SK-N-SH (cell line): ENCODE measurements at regions of chr7 and their contacts with region 1.

Region 1: DNA sequence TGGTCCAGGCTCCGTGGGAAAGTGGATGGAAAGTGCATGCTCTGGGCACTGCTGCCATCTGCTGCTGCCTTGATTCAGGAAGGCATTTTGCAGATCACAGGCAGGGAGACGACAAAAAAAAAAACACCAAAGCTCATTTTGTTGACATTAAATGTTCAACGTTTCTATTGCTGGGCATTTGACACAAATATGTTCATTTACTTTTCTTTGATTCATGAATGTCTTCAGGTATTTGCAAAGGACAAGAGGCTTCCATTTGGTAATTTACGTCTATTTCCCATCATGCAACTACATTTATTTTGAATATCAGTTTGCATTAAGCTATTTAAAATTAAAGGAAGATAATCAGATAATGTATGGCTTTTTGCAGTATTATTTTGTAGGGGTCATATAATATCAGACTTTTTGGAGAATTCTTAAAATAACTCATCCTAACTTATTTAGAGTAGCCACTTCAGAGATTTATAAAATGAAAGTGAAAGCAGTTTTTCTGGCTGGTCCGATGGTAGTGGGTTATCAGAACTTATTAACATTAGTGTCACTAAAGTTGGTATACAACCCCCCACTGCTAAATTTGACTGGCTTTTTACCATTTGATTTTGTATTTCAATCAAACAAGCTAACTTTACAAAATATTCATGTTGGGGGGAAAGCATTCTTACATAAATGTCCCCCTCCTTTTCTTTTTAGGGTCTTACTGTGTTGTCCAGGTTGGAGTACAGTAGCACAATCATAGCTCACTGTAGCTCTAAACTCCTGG is 65.3 kb downstream of the PDIA4 start:
- DNase-seq: peak; percentile 82
- H3K4me3 ChIP-seq: peak overlapping the region; percentile 56 to 69
- H3K27ac ChIP-seq: peak overlapping the region; percentile 24 to 73
- H3K4me1 ChIP-seq: no peaks in the 10 kb centered on the region; a peak in 2 of 4 replicates
- H3K27me3 ChIP-seq: no peaks in the 10 kb centered on the region
- CTCF ChIP-seq: peak; percentile 100
- EP300 ChIP-seq: no peak
- RAD21 ChIP-seq: peak; percentile 98

Region 2: GRCh38 chr7:148503875-148504487 is 459.0 kb before region 1 on chr7:
- CTCF ChIA-PET with region 1: interaction called, 55 read pairs
- POLR2A ChIA-PET with region 1: no interaction called
- DNase-seq: peak; percentile 48
- H3K4me3 ChIP-seq: no peak overlapping the region
- H3K27ac ChIP-seq: no peak overlapping the region
- H3K4me1 ChIP-seq: peaks cover 0 to 4% of the 10 kb centered on the region in 2 experiments; a peak in 1 of 4 replicates
- H3K27me3 ChIP-seq: peaks cover 18% of the 10 kb centered on the region; the same call in 1 of the 2 replicates
- CTCF ChIP-seq: peak; percentile 99
- EP300 ChIP-seq: no peak
- RAD21 ChIP-seq: peak; percentile 90

Region 3: DNA sequence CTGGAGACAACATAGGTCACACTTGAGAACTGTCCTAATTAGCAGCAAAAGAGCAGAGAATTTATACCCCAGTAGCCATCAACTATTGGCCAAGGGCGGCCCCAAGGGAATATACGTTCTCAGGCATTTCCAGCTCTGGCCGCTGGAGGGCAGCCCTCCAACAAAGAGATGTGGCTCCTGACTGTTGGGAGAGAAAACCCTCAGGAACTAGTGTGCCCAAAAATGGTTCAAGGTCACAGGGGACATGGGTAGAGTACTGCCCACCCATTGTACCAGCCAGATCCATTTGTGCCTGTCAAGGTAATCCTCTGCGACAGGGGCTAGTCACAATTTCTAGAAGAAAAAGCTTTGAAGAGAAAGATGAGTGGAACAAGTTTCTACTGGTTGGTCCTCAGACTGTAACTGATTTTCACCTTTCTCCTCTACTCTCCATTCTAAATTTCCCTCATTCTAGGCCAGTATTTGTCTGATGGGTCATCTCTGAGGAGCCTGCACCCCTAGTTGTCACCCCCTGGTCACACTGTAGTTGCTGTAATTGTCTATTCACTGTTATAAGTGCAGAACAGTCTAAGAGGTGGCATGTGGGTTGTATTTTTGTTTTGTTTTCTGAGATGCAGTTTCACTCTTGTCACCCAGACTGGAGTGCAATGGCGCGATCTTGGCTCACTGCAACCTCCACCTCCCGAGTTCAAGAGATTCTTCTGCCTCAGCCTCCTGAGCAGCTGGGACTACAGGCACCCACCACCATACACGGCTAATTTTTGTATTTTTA is 387.2 kb before region 1 on chr7:
- CTCF ChIA-PET with region 1: interaction called, 114 read pairs
- POLR2A ChIA-PET with region 1: no interaction called
- DNase-seq: peak; percentile 75
- H3K4me3 ChIP-seq: no peak overlapping the region
- H3K27ac ChIP-seq: no peak overlapping the region
- H3K4me1 ChIP-seq: no peaks in the 10 kb centered on the region
- H3K27me3 ChIP-seq: no peaks in the 10 kb centered on the region
- CTCF ChIP-seq: peak; percentile 98
- EP300 ChIP-seq: 0 out of 4 replicates have a peak, but pooled peaks of 1 of the 2 experiments have one; percentile 7
- RAD21 ChIP-seq: peak; percentile 94

Region 4: DNA sequence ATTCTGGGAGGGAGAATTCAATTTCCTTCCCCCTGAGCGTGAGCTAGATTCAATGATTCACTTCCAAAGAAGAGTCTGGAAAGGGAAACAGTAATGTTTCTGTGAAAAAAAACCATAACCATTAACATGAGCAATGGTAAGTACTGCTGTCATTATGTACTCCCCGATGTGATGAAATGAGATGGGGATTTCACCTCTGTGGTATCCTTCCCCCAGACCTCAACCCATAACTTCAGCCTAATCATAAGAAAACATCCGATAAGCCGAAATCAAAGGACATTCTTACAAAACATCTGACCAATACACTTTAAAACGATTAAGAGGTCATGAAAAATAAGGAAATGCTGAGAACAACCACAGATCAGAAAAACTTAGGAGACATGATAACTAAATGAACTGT is 106.1 kb before region 1 on chr7:
- CTCF ChIA-PET with region 1: interaction called, 14 read pairs
- POLR2A ChIA-PET with region 1: no interaction called
- DNase-seq: no peak
- H3K4me3 ChIP-seq: no peak overlapping the region
- H3K27ac ChIP-seq: no peak overlapping the region; a peak in 1 of 4 replicates
- H3K4me1 ChIP-seq: peaks cover 0 to 6% of the 10 kb centered on the region in 2 experiments; a peak in 2 of 4 replicates
- H3K27me3 ChIP-seq: no peaks in the 10 kb centered on the region
- CTCF ChIP-seq: no peak
- EP300 ChIP-seq: no peak
- RAD21 ChIP-seq: no peak

Region 5: DNA sequence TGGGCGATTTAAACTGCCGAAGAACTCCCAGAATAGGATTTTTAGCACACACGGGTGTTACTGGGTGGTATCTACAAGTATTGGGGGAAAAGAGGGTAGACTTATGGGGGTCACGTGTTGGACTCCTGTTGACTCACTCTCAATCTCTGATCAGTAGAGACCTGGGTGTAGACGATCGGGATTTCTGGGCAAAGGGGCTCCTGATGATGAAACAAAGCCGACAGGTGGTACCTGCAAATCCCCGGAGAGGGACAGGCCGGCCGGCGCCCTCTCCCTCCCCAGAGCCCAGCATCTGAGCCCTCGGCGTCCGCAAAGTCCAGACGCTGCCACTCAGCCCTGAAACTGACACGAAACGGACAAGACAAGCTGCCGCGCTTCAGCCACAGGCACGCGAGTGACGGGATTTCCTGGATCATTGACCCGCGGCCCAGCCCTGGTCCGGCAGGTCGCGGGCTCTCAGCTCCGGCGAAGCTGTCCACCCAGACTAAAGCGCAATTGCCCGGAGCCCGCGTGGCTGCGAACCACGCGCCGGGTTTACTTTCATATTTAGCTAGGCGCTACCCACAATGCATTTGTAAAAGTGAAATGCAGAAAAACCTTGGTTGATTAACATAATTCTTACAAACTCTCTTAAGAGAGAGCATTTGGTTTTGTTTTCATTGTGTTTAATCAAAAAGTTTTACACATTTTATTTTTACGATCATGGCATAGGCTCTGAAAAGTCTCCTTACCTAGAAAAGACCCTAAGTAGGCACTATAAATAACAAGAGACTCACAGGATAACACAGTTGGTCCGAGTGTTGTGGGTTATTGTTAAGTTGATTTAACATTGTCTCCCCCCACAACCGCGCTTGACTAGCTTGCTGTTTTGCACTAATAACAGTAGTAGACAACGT is 22.1 kb before region 1 on chr7:
- CTCF ChIA-PET with region 1: interaction called, 28 read pairs
- POLR2A ChIA-PET with region 1: interaction called, 5 read pairs
- DNase-seq: peak; percentile 88
- H3K4me3 ChIP-seq: peak overlapping the region; percentile 65 to 83
- H3K27ac ChIP-seq: peak overlapping the region; percentile 76 to 91
- H3K4me1 ChIP-seq: peaks cover 0 to 6% of the 10 kb centered on the region in 2 experiments; a peak in 2 of 4 replicates
- H3K27me3 ChIP-seq: no peaks in the 10 kb centered on the region
- CTCF ChIP-seq: no peak
- EP300 ChIP-seq: peak in 1 of 2 experiments; percentile 59; a peak in 1 of 4 replicates
- RAD21 ChIP-seq: 0 out of 2 replicates have a peak, but pooled peaks have one; percentile 10

Region 6: GRCh38 chr7:148987010-148987750 is 24.2 kb after region 1 on chr7:
- CTCF ChIA-PET with region 1: interaction called, 29 read pairs
- POLR2A ChIA-PET with region 1: interaction called, 3 read pairs
- DNase-seq: peak; percentile 94
- H3K4me3 ChIP-seq: peak overlapping the region; percentile 79 to 89
- H3K27ac ChIP-seq: peak overlapping the region; percentile 75 to 83
- H3K4me1 ChIP-seq: peaks cover 6 to 12% of the 10 kb centered on the region in 2 experiments; a peak in 2 of 4 replicates
- H3K27me3 ChIP-seq: no peaks in the 10 kb centered on the region
- CTCF ChIP-seq: 0 out of 2 replicates have a peak, but pooled peaks have one; percentile 9
- EP300 ChIP-seq: no peak
- RAD21 ChIP-seq: no peak